GM12878 (cell line): ENCODE measurements at regions of chr9 and their contacts with region 1.

Region 1: GRCh38 chr9:96418074-96418809 is at the start of gene ZNF367:
- DNase-seq: peak; percentile 81
- ATAC-seq: peak; percentile 84
- H3K4me3 ChIP-seq: peak within 1 kb of the TSS; percentile 91
- H3K27ac ChIP-seq: peak within 1 kb of the TSS; percentile 90
- H3K4me1 ChIP-seq: peaks cover 25% of the 10 kb centered on the region
- H3K27me3 ChIP-seq: no peaks in the 10 kb centered on the region
- CTCF ChIP-seq: no peak
- EP300 ChIP-seq: peak in 1 of 2 experiments; percentile 33; a peak in 1 of 4 replicates
- POLR2A ChIP-seq: peak; percentile 84
- RAD21 ChIP-seq: no peak
- polyA plus RNA-seq, gene ZNF367: 3.9 to 5.5 TPM

Region 2: DNA sequence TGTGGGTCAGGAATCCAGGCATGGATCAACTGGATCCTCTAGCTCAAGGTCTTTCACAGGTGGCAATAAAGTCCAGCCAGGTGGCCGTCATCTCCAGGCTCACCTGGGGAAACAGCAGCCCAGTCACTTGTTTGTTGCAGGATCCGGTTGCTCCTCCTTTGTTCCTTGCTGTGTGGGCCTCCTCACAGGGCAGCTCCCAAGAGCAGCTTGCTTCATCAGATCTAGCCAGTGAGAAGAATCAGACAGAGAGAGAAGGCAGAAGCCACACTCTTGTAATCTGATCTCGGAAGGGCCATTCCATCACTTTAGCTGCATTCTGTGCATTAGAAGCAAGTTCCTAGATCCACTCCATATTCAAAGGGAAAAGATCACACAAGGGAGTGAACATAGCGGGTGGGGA is 113.1 kb before region 1 on chr9:
- CTCF ChIA-PET with region 1: no interaction called
- POLR2A ChIA-PET with region 1: interaction called, 13 read pairs
- RAD21 ChIA-PET with region 1: no interaction called
- SMC1A ChIA-PET with region 1: no interaction called
- in situ Hi-C with region 1: no loop called
- intact Hi-C with region 1: no loop called
- DNase-seq: no peak
- ATAC-seq: no peak
- H3K4me3 ChIP-seq: no peak overlapping the region
- H3K27ac ChIP-seq: no peak overlapping the region
- H3K4me1 ChIP-seq: no peaks in the 10 kb centered on the region
- H3K27me3 ChIP-seq: no peaks in the 10 kb centered on the region; a peak in 1 of 4 replicates
- CTCF ChIP-seq: no peak
- EP300 ChIP-seq: no peak
- POLR2A ChIP-seq: no peak
- RAD21 ChIP-seq: no peak

Region 3: GRCh38 chr9:96327694-96328352 is 90.4 kb before region 1 on chr9:
- CTCF ChIA-PET with region 1: interaction called, 6 read pairs
- POLR2A ChIA-PET with region 1: interaction called, 5 read pairs
- RAD21 ChIA-PET with region 1: interaction called, 12 read pairs
- SMC1A ChIA-PET with region 1: interaction called, 11 read pairs
- in situ Hi-C with region 1: no loop called
- intact Hi-C with region 1: no loop called
- DNase-seq: peak; percentile 8
- ATAC-seq: peak; percentile 85
- H3K4me3 ChIP-seq: no peak overlapping the region
- H3K27ac ChIP-seq: no peak overlapping the region
- H3K4me1 ChIP-seq: no peaks in the 10 kb centered on the region
- H3K27me3 ChIP-seq: no peaks in the 10 kb centered on the region
- CTCF ChIP-seq: peak; percentile 71 to 75 (median 75)
- EP300 ChIP-seq: no peak
- POLR2A ChIP-seq: no peak
- RAD21 ChIP-seq: peak; percentile 77

Region 4: DNA sequence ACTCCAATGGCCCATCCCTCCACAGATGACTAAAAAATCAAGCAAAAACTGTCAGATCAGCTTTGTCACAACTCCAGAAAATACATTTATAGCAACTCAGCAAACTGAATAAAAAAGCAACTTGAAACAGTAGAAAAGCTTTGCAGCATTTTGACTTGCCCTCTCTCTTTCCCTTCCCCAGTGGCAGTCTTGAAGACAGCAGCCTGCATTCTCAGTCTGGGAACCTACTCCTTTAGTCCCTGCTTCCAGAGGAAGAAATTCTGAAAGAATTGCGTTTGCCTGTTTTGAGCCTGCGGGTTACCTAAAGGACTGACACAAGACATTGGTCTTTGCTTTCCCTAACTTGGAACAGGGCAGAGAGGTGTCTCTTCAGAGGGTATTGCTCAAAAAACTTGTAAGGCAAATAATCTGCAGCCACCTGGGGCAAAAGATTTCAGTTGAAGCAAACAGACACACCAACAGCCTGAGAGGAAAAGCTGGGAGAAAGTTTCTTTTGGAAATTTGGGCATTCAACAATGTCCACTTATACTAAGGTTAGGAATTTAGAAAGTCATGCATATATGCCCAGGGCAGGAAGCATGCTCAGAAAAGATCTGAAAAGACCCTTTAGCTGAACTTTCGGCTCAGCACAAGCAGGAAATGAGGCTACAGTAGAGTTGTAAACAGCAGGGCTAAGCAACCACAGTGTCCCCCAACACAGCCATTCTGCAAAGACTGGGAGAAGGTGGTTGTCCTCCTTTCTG is 19.5 kb before region 1 on chr9:
- CTCF ChIA-PET with region 1: interaction called, 8 read pairs
- POLR2A ChIA-PET with region 1: interaction called, 3 read pairs
- RAD21 ChIA-PET with region 1: interaction called, 8 read pairs
- SMC1A ChIA-PET with region 1: interaction called, 14 read pairs
- in situ Hi-C with region 1: no loop called
- intact Hi-C with region 1: no loop called
- DNase-seq: no peak
- ATAC-seq: peak; percentile 75
- H3K4me3 ChIP-seq: no peak overlapping the region
- H3K27ac ChIP-seq: peak overlapping the region; percentile 78
- H3K4me1 ChIP-seq: peaks cover 11% of the 10 kb centered on the region
- H3K27me3 ChIP-seq: no peaks in the 10 kb centered on the region
- CTCF ChIP-seq: 0 out of 6 replicates have a peak, but pooled peaks of 1 of the 3 experiments have one; percentile 13
- EP300 ChIP-seq: no peak
- POLR2A ChIP-seq: peak; percentile 31; the same call in 1 of the 2 replicates
- RAD21 ChIP-seq: no peak

Region 5: GRCh38 chr9:96449845-96450612 is 31.8 kb after region 1 on chr9 and contains the start of gene HABP4:
- CTCF ChIA-PET with region 1: interaction called, 9 read pairs
- POLR2A ChIA-PET with region 1: interaction called, 5 read pairs
- RAD21 ChIA-PET with region 1: interaction called, 9 read pairs
- SMC1A ChIA-PET with region 1: interaction called, 16 read pairs
- in situ Hi-C with region 1: no loop called
- intact Hi-C with region 1: loop called (anchors 2 kb)
- DNase-seq: peak; percentile 48
- ATAC-seq: peak; percentile 99
- H3K4me3 ChIP-seq: peak within 1 kb of the TSS; percentile 68
- H3K27ac ChIP-seq: no peak within 1 kb of the TSS
- H3K4me1 ChIP-seq: peaks cover 6% of the 10 kb centered on the region
- H3K27me3 ChIP-seq: peaks cover 0 to 3% of the 10 kb centered on the region in 2 experiments; a peak in 1 of 4 replicates
- CTCF ChIP-seq: no peak
- EP300 ChIP-seq: no peak
- POLR2A ChIP-seq: peak; percentile 78
- RAD21 ChIP-seq: no peak
- polyA plus RNA-seq, gene HABP4: 4.4 to 5.7 TPM

Region 6: GRCh38 chr9:96566498-96567207 is 148.4 kb after region 1 on chr9:
- CTCF ChIA-PET with region 1: no interaction called
- POLR2A ChIA-PET with region 1: interaction called, 8 read pairs
- RAD21 ChIA-PET with region 1: interaction called, 5 read pairs
- SMC1A ChIA-PET with region 1: interaction called, 6 read pairs
- in situ Hi-C with region 1: no loop called
- intact Hi-C with region 1: loop called (anchors 10 kb)
- DNase-seq: no peak
- ATAC-seq: peak; percentile 91
- H3K4me3 ChIP-seq: peak overlapping the region; percentile 80
- H3K27ac ChIP-seq: peak overlapping the region; percentile 46
- H3K4me1 ChIP-seq: peaks cover 3% of the 10 kb centered on the region
- H3K27me3 ChIP-seq: no peaks in the 10 kb centered on the region
- CTCF ChIP-seq: peak; percentile 63 to 77 (median 75)
- EP300 ChIP-seq: no peak
- POLR2A ChIP-seq: peak; percentile 81
- RAD21 ChIP-seq: peak; percentile 57

Region 7: GRCh38 chr9:97632985-97633858 is 1215.0 kb after region 1 on chr9 and contains the starts of genes NCBP1 and TSTD2:
- CTCF ChIA-PET with region 1: no interaction called
- POLR2A ChIA-PET with region 1: no interaction called
- RAD21 ChIA-PET with region 1: no interaction called
- SMC1A ChIA-PET with region 1: no interaction called
- in situ Hi-C with region 1: loop called (anchors 25 kb)
- intact Hi-C with region 1: no loop called
- DNase-seq: peak; percentile 92
- ATAC-seq: peak; percentile 90
- H3K4me3 ChIP-seq: peak within 1 kb of the TSS; percentile 96
- H3K27ac ChIP-seq: peak within 1 kb of the TSS; percentile 93
- H3K4me1 ChIP-seq: peaks cover 5% of the 10 kb centered on the region
- H3K27me3 ChIP-seq: no peaks in the 10 kb centered on the region
- CTCF ChIP-seq: no peak
- EP300 ChIP-seq: peak in 1 of 2 experiments; percentile 25; a peak in 1 of 4 replicates
- POLR2A ChIP-seq: peak; percentile 95
- RAD21 ChIP-seq: no peak
- polyA plus RNA-seq, gene NCBP1: 14.7 to 21.5 TPM
- polyA plus RNA-seq, gene TSTD2: 5.0 to 5.3 TPM